ENCODE measurements at regions of chr2 and their contacts with region 1.

Region 1: GRCh38 chr2:25951071-25951547 is 31.2 kb downstream of the KIF3C start:
- DNase-seq: peak; percentile 14 to 73
- H3K4me3 ChIP-seq: no peak overlapping the region
- H3K27ac ChIP-seq: no peak overlapping the region
- H3K4me1 ChIP-seq: no peaks in the 10 kb centered on the region
- H3K27me3 ChIP-seq: no peaks in the 10 kb centered on the region
- CTCF ChIP-seq: peak; percentile 86 to 92 (median 88)

Region 2: DNA sequence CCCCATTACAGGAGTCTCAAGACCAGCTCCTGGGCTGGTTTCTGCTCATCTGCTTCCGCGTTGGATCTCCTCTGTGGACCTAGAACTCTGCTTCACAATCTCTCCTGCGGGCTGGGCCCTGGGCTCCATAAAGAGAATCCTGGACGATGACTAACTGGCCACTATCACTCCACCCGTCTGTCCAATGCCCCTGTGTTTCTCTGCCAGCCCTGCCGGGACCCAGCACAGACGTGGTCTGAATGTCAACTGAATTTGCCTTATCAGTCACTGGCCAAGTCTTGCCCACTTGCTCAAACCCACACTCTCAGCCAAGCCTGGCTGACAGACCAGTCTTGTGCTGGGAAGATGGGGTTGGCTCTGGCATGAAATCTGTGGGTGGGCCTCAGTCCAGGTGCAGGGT is 13.8 kb after region 1 on chr2:
- intact Hi-C with region 1: no loop called
- DNase-seq: no peak
- H3K4me3 ChIP-seq: no peak overlapping the region
- H3K27ac ChIP-seq: no peak overlapping the region
- H3K4me1 ChIP-seq: no peaks in the 10 kb centered on the region
- H3K27me3 ChIP-seq: no peaks in the 10 kb centered on the region
- CTCF ChIP-seq: no peak

Region 3: GRCh38 chr2:25982273-25982967 is 31.3 kb after region 1 on chr2 and contains the start of gene KIF3C:
- intact Hi-C with region 1: loop called (anchors 2 kb)
- DNase-seq: peak in 1 of 2 donors; percentile 81
- H3K4me3 ChIP-seq: peak within 1 kb of the TSS; percentile 86 to 95
- H3K27ac ChIP-seq: peak within 1 kb of the TSS; percentile 4 to 60
- H3K4me1 ChIP-seq: peaks cover 0 to 22% of the 10 kb centered on the region in 2 donors
- H3K27me3 ChIP-seq: no peaks in the 10 kb centered on the region
- CTCF ChIP-seq: no peak
- total RNA-seq, gene KIF3C: 11.9 TPM

Region 4: GRCh38 chr2:26144953-26145680 is 194.0 kb after region 1 on chr2:
- intact Hi-C with region 1: loop called (anchors 1 kb)
- DNase-seq: peak in 1 of 2 donors; percentile 68
- H3K4me3 ChIP-seq: no peak overlapping the region
- H3K27ac ChIP-seq: no peak overlapping the region
- H3K4me1 ChIP-seq: no peaks in the 10 kb centered on the region
- H3K27me3 ChIP-seq: no peaks in the 10 kb centered on the region
- CTCF ChIP-seq: peak; percentile 61 to 75 (median 74)

Region 5: GRCh38 chr2:26184555-26185303 is 233.6 kb after region 1 on chr2:
- intact Hi-C with region 1: loop called (anchors 1 kb)
- DNase-seq: peak; percentile 19 to 89
- H3K4me3 ChIP-seq: peak overlapping the region; percentile 73 to 82
- H3K27ac ChIP-seq: peak overlapping the region; percentile 67 to 73
- H3K4me1 ChIP-seq: no peaks in the 10 kb centered on the region
- H3K27me3 ChIP-seq: no peaks in the 10 kb centered on the region
- CTCF ChIP-seq: peak; percentile 44 to 87 (median 58)

Region 6: GRCh38 chr2:26330113-26330549 is 379.0 kb after region 1 on chr2:
- intact Hi-C with region 1: loop called (anchors 1 kb)
- DNase-seq: peak; percentile 66 to 93
- H3K4me3 ChIP-seq: no peak overlapping the region
- H3K27ac ChIP-seq: no peak overlapping the region
- H3K4me1 ChIP-seq: no peaks in the 10 kb centered on the region
- H3K27me3 ChIP-seq: no peaks in the 10 kb centered on the region
- CTCF ChIP-seq: peak; percentile 70 to 90 (median 84)

Measured in ascending aorta (tissue), 2 donors.